ENCODE measurements at regions of chr19 and their contacts with region 1.

Region 1: GRCh38 chr19:6312018-6312417 is 21.4 kb downstream of the ACER1 start:
- DNase-seq: no peak
- ATAC-seq: peak; percentile 40; the same call in 2 of the 3 replicates
- H3K4me3 ChIP-seq: no peak overlapping the region
- H3K27ac ChIP-seq: no peak overlapping the region
- H3K4me1 ChIP-seq: no peaks in the 10 kb centered on the region
- H3K27me3 ChIP-seq: peaks cover 1 to 10% of the 10 kb centered on the region in 2 experiments
- CTCF ChIP-seq: peak; percentile 59
- EP300 ChIP-seq: no peak
- POLR2A ChIP-seq: no peak
- RAD21 ChIP-seq: peak; percentile 25; the same call in 1 of the 2 replicates

Region 2: DNA sequence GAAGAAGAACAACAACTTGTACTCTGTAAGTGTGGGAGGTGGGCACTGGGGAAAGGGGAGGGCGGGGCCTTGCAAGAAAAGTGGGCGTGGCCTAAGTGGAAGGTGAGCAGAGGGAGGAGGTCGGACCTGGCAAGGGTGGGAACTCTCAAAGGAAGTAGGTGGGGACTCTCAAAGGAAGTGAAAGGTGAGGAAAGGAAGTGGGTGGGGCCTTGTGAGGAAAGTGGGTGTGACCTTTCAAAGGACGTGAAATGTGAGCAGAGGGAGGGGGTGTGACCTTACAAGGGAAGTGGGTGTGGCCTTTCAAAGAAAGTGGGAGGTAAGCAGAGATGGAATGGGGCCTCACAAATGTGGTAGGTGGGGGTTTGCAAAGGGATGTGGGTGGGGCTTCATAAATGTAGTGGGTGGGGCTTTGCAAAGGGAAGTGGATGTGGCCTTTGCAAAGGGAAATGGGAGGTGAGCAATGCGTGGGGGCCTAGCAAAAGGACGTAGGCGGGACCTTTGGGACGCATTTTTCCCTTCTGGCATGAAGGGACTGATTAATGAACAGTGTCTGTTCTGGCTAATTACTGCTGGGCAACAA is 150.7 kb before region 1 on chr19:
- CTCF ChIA-PET with region 1: no interaction called
- POLR2A ChIA-PET with region 1: no interaction called
- in situ Hi-C with region 1: loop called (anchors 10 kb)
- intact Hi-C with region 1: no loop called
- DNase-seq: peak; percentile 13
- ATAC-seq: no peak
- H3K4me3 ChIP-seq: no peak overlapping the region
- H3K27ac ChIP-seq: no peak overlapping the region
- H3K4me1 ChIP-seq: peaks cover 7% of the 10 kb centered on the region
- H3K27me3 ChIP-seq: no peaks in the 10 kb centered on the region; a peak in 1 of 5 replicates
- CTCF ChIP-seq: no peak
- EP300 ChIP-seq: no peak
- POLR2A ChIP-seq: no peak
- RAD21 ChIP-seq: no peak

Region 3: GRCh38 chr19:6292006-6292405 is 20.0 kb before region 1 on chr19:
- CTCF ChIA-PET with region 1: no interaction called
- POLR2A ChIA-PET with region 1: no interaction called
- in situ Hi-C with region 1: no loop called
- intact Hi-C with region 1: no loop called
- DNase-seq: no peak
- ATAC-seq: no peak
- H3K4me3 ChIP-seq: no peak overlapping the region
- H3K27ac ChIP-seq: no peak overlapping the region
- H3K4me1 ChIP-seq: peaks cover 12% of the 10 kb centered on the region
- H3K27me3 ChIP-seq: no peaks in the 10 kb centered on the region
- CTCF ChIP-seq: no peak
- EP300 ChIP-seq: no peak
- POLR2A ChIP-seq: no peak
- RAD21 ChIP-seq: no peak

Region 4: GRCh38 chr19:6393074-6393983 is 81.3 kb after region 1 on chr19 and contains the start of gene GTF2F1:
- CTCF ChIA-PET with region 1: no interaction called
- POLR2A ChIA-PET with region 1: no interaction called
- in situ Hi-C with region 1: no loop called
- intact Hi-C with region 1: no loop called
- DNase-seq: peak; percentile 89
- ATAC-seq: peak; percentile 92
- H3K4me3 ChIP-seq: peak within 1 kb of the TSS; percentile 81 to 99 (median 92)
- H3K27ac ChIP-seq: peak within 1 kb of the TSS; percentile 65
- H3K4me1 ChIP-seq: peaks cover 24% of the 10 kb centered on the region
- H3K27me3 ChIP-seq: no peaks in the 10 kb centered on the region; a peak in 1 of 5 replicates
- CTCF ChIP-seq: peak; percentile 54
- EP300 ChIP-seq: no peak
- POLR2A ChIP-seq: peak; percentile 52 to 70; a peak in 3 of 4 replicates
- RAD21 ChIP-seq: peak; percentile 63; the same call in 1 of the 2 replicates
- total RNA-seq, gene GTF2F1: 30.7 and 34.1 TPM in 2 replicates

Measured in HepG2 (cell line).